PC-9 (cell line): ENCODE measurements at regions of chr5 and their contacts with region 1.

Region 1: GRCh38 chr5:107217721-107218130 is 453.0 kb downstream of the EFNA5 start:
- DNase-seq: peak; percentile 76 to 96
- H3K4me3 ChIP-seq: peak overlapping the region; percentile 45; the same call in 1 of the 2 replicates
- H3K27ac ChIP-seq: peak overlapping the region; percentile 96
- H3K4me1 ChIP-seq: peaks cover 53% of the 10 kb centered on the region
- H3K27me3 ChIP-seq: no peaks in the 10 kb centered on the region
- CTCF ChIP-seq: no peak

Region 2: DNA sequence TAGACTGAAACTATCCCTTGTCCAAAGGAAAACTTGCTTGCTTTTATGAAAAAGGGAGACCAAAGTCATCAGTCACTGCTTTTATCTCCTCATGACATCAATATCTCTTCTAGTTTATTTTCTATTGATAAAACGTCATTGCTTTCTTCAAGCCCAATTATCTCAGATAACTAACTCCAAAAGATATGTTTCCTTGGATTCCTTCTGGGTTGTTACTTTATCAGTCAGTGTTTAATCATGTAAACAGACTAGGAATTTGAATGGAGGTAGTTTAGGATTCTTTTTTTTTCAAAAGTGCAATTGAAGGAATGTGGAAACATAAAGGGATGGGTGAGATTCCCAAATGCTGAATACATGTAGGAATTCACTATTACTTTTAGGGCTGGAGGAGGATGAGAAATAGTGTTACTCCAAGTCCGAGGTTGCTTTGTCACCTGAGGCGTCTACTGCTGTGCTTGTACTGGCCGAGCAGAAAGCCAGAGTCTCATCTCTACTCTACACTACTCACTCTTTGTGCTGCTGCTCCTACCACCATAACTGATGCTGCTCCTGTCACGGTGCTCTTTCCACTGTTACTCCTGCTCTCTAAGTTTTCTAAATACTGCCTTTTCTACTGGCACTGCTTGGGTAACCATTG is 1958.0 kb before region 1 on chr5:
- CTCF ChIA-PET with region 1: no interaction called
- POLR2A ChIA-PET with region 1: no interaction called
- intact Hi-C with region 1: no loop called
- DNase-seq: no peak
- H3K4me3 ChIP-seq: no peak overlapping the region
- H3K27ac ChIP-seq: no peak overlapping the region
- H3K4me1 ChIP-seq: no peaks in the 10 kb centered on the region
- H3K27me3 ChIP-seq: no peaks in the 10 kb centered on the region
- CTCF ChIP-seq: no peak

Region 3: DNA sequence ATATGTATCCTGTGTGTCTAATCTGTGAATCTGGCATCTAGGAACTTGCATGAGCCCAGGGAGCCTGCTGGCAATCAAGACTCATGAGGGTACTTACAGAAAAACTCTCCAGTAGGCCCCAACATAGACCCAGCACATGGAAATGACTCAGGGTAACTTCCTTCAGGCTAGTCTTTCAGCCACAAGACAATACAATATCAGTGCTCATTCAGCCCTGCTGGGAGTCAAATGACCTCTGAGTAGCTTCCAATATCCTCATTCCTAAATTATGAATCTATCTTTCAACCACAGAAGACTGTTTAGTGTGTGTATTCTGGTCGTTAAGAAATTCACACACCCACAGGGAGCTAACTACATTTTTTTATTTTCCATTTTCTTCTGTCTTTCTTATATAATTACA is 820.0 kb before region 1 on chr5:
- CTCF ChIA-PET with region 1: no interaction called
- POLR2A ChIA-PET with region 1: no interaction called
- intact Hi-C with region 1: loop called (anchors 5 kb)
- DNase-seq: peak; percentile 66 to 95
- H3K4me3 ChIP-seq: no peak overlapping the region
- H3K27ac ChIP-seq: peak overlapping the region; percentile 89
- H3K4me1 ChIP-seq: peaks cover 41% of the 10 kb centered on the region
- H3K27me3 ChIP-seq: no peaks in the 10 kb centered on the region
- CTCF ChIP-seq: no peak

Region 4: GRCh38 chr5:107058239-107058638 is 159.5 kb before region 1 on chr5:
- CTCF ChIA-PET with region 1: no interaction called
- POLR2A ChIA-PET with region 1: no interaction called
- intact Hi-C with region 1: loop called (anchors 5 kb)
- DNase-seq: peak in 1 of 2 experiments; percentile 40
- H3K4me3 ChIP-seq: no peak overlapping the region
- H3K27ac ChIP-seq: no peak overlapping the region
- H3K4me1 ChIP-seq: no peaks in the 10 kb centered on the region; the same call in 1 of the 2 replicates
- H3K27me3 ChIP-seq: no peaks in the 10 kb centered on the region
- CTCF ChIP-seq: no peak

Region 5: GRCh38 chr5:107134931-107135330 is 82.8 kb before region 1 on chr5:
- CTCF ChIA-PET with region 1: no interaction called
- POLR2A ChIA-PET with region 1: no interaction called
- intact Hi-C with region 1: loop called (anchors 5 kb)
- DNase-seq: no peak
- H3K4me3 ChIP-seq: no peak overlapping the region
- H3K27ac ChIP-seq: peak overlapping the region; percentile 3; the same call in 1 of the 2 replicates
- H3K4me1 ChIP-seq: peaks cover 8% of the 10 kb centered on the region; the same call in 1 of the 2 replicates
- H3K27me3 ChIP-seq: no peaks in the 10 kb centered on the region
- CTCF ChIP-seq: no peak